Activated CD4-positive, alpha-beta memory T cell treated with anti-CD3 and anti-CD28 coated beads for 36 hours (primary cell): ENCODE measurements at regions of chr9 and their contacts with region 1.

Region 1: DNA sequence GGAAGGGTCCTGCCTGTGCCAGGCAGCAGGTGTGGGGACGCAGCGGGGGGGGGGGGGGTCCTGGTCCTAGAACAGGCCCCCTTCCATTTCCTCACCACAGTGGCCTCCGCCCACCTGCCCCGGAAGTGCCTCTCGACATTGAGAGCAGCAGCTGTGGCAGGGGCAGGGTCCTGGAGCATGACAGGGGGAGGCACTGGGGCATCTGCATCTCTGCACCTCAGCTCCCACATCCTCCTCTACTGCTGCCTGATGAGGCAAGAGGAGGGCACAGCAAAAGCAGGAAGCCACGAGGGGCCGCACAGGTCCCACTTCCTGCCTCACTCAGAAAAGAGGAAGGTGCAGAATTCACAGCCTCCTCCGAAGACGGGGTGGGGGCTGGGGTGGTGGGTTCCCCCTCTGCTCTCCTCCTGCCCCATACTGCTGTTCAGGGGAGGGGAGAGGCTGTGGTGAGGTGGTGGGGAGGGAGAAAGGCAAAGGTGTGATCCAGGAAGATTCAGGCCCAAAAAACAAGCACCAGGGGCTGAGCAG is 14.8 kb downstream of the AKNA start:
- DNase-seq: peak; percentile 92
- H3K4me3 Mint-ChIP-seq: peak overlapping the region; percentile 68
- H3K27ac Mint-ChIP-seq: peak overlapping the region; percentile 98
- H3K4me1 Mint-ChIP-seq: peaks cover 84% of the 10 kb centered on the region
- H3K27me3 Mint-ChIP-seq: no peaks in the 10 kb centered on the region

Region 2: DNA sequence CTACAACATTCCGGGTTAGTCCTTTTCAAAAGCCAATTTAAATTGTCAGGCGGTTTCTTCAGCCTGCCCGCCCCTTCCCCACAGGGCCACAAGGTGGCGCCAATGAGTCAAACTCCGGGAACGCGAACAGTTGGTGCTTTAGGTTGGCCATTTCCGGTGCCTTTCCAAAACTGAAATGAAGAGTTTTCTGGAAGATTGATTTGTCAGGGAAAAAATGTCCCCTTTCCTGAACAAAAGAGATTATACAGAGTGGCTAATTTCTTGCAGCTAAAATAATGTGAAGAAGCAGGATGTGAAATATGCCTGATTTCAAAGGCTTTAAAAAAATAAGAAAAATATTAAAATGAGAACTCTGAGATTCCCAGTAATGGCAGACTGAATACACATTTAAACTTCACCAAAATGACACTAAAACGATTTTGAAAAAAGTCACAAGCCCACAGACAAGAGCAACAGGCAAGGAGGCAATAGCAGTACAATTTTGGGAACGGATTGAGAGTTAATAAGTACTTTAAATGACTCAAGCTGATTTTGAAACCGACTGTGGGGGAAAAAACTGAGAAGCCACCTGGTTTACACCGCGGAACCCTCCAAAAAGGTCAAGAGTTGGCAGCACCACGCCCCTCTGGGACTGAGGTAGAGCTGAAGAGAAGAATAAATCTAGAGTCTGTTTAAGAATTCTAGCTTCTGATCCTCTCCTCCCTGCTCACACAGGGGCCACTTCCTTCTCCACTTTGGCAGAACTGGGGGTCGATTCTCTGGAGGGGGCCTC is 1528.0 kb before region 1 on chr9:
- CTCF ChIA-PET with region 1: no interaction called
- POLR2A ChIA-PET with region 1: no interaction called
- intact Hi-C with region 1: no loop called
- DNase-seq: peak; percentile 86
- H3K4me3 Mint-ChIP-seq: no peak overlapping the region
- H3K27ac Mint-ChIP-seq: no peak overlapping the region
- H3K4me1 Mint-ChIP-seq: peaks cover 15% of the 10 kb centered on the region
- H3K27me3 Mint-ChIP-seq: no peaks in the 10 kb centered on the region

Region 3: DNA sequence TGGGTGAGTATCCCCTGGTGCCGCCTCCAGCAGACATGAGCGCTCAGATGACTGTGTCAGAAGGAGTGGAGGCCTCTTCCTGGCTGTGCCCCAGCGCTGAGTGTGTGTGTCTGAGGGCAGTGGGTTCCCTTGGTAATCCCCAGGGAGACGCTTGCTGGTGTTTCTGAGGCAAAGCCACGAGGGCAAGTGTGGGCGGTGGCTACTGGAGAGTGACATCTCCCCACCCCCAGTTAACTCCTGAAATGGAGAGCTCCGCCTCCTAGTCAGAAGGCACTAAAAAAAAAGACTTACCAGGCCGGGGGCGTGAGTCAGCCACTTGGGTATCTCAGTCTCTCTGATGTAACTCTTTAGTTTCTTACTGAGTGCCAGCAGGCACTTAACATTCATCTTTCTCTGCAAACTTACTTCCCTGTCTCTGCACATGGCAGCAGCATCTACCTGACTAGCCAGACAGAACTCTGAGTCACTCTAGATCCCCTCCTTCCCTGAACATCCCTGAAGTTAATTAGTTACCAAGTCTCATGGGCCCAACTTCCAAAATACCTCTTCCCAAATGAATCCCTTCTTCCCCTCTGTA is 24.0 kb before region 1 on chr9:
- CTCF ChIA-PET with region 1: interaction called, 3 read pairs
- POLR2A ChIA-PET with region 1: interaction called, 4 read pairs
- intact Hi-C with region 1: loop called (anchors 1 kb)
- DNase-seq: peak; percentile 97
- H3K4me3 Mint-ChIP-seq: peak overlapping the region; percentile 40
- H3K27ac Mint-ChIP-seq: peak overlapping the region; percentile 100
- H3K4me1 Mint-ChIP-seq: peaks cover 46% of the 10 kb centered on the region
- H3K27me3 Mint-ChIP-seq: no peaks in the 10 kb centered on the region